Activated T-helper 2 cell treated with anti-CD3 and anti-CD28 coated beads, Interferon-gamma antibody, Interleukin-2, Interleukin-4, amounts not matched to agents 10 μg/mL and 5 μg/mL and 100 μg/mL, durations not matched to agents 14 hours and 24 hours and 36 hours (primary cell): ENCODE measurements at regions of chr12 and their contacts with region 1.

Region 1: GRCh38 chr12:104569346-104570173 is 112.8 kb downstream of the CHST11 start:
- DNase-seq: peak; percentile 51
- H3K4me3 Mint-ChIP-seq: peak overlapping the region; percentile 61
- H3K27ac Mint-ChIP-seq: peak overlapping the region; percentile 71
- H3K4me1 Mint-ChIP-seq: peaks cover 54% of the 10 kb centered on the region
- H3K27me3 Mint-ChIP-seq: no peaks in the 10 kb centered on the region

Region 2: DNA sequence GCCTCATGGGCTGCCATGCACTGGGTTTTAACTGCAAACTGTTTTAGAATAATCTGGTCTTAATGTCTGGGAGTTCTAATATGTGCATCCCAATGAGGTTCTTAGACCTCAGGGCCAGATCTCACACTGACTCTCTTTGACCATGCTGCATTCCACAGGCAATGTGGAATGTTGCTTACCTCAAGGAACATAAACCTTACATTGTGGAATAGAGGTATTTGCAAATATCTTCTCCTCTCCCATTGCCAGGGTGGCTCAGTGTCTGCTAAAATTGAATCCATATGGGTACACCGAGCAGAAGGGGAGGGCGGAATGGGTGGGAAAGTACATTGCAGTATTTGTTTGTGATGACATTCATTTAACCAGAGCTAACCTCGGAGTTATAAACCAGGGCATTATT is 34.2 kb before region 1 on chr12:
- intact Hi-C with region 1: no loop called
- DNase-seq: no peak
- H3K4me3 Mint-ChIP-seq: no peak overlapping the region
- H3K27ac Mint-ChIP-seq: no peak overlapping the region
- H3K4me1 Mint-ChIP-seq: peaks cover 54% of the 10 kb centered on the region
- H3K27me3 Mint-ChIP-seq: no peaks in the 10 kb centered on the region

Region 3: DNA sequence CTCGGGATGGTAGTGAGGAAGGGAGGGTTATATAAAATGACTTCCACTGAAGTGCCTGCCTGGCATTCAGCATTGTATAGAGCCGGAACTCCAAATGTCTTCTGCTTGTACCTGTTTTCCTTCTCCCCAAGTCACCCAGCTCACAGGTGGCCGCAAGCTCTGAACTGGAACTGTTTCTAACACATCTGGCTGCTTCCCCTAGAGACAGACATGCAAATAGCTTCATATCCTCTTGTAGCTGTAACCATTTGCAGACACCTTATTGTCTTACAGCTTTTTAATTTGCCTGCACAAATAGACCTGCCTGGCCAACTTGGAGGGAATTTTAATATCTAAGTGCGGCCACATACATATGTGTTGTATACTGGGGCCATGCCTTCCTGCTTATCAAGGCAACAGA is 13.2 kb after region 1 on chr12:
- intact Hi-C with region 1: loop called (anchors 1 kb)
- DNase-seq: no peak
- H3K4me3 Mint-ChIP-seq: no peak overlapping the region
- H3K27ac Mint-ChIP-seq: no peak overlapping the region
- H3K4me1 Mint-ChIP-seq: peaks cover 67% of the 10 kb centered on the region
- H3K27me3 Mint-ChIP-seq: no peaks in the 10 kb centered on the region

Region 4: DNA sequence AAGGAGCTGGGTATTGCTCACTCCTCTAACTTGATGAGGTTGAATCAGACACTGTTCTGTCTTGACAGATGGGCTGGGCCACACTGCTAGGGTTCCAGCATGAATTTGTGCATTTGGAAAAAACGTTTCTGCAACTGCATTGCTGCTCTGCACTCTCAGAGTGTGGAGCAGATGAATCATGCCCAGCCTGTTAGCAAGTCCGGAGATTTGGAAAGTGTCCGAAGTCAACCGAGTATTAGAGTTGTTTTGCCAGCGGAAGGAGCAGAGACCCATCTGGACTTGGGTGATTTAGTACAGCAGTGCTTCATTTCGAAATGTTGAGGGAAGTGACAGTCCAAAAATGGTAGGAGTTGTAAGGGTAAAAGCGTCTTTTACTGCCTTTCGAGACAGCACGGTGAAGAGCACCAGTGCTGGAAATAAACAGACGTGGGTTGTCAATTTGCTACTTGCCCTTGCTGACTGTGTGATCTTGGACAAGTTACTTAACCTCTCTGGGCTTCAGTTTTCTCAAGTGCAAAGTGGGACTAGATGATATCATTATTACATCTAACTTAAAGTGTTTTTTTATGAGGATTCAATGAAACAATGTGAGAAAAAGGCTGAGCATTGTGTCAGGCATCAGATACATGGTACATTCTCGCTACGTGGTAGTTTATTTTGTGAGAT is 26.7 kb after region 1 on chr12:
- intact Hi-C with region 1: no loop called
- DNase-seq: no peak
- H3K4me3 Mint-ChIP-seq: no peak overlapping the region
- H3K27ac Mint-ChIP-seq: no peak overlapping the region
- H3K4me1 Mint-ChIP-seq: peaks cover 18% of the 10 kb centered on the region
- H3K27me3 Mint-ChIP-seq: no peaks in the 10 kb centered on the region